H1 (cell line): ENCODE measurements at regions of chr3 and their contacts with region 1.

Region 1: GRCh38 chr3:113535898-113536297 is 3.5 kb downstream of the SIDT1 start:
- DNase-seq: no peak
- H3K4me3 ChIP-seq: no peak overlapping the region
- H3K27ac ChIP-seq: no peak overlapping the region
- H3K4me1 ChIP-seq: peaks cover 0 to 2% (median 0%) of the 10 kb centered on the region in 4 experiments; a peak in 1 of 7 replicates
- H3K27me3 ChIP-seq: peaks cover 32 to 45% (median 39%) of the 10 kb centered on the region in 4 experiments
- CTCF ChIP-seq: peak; percentile 9 to 68 (median 44); a peak in 3 of 4 replicates
- EP300 ChIP-seq: no peak
- POLR2A ChIP-seq: no peak
- RAD21 ChIP-seq: peak; percentile 48 to 52

Region 2: GRCh38 chr3:113450911-113451310 is 85.0 kb before region 1 on chr3:
- CTCF ChIA-PET with region 1: no interaction called
- POLR2A ChIA-PET with region 1: no interaction called
- DNase-seq: no peak
- H3K4me3 ChIP-seq: no peak overlapping the region
- H3K27ac ChIP-seq: no peak overlapping the region
- H3K4me1 ChIP-seq: no peaks in the 10 kb centered on the region
- H3K27me3 ChIP-seq: no peaks in the 10 kb centered on the region
- CTCF ChIP-seq: no peak
- EP300 ChIP-seq: no peak
- POLR2A ChIP-seq: no peak
- RAD21 ChIP-seq: no peak

Region 3: DNA sequence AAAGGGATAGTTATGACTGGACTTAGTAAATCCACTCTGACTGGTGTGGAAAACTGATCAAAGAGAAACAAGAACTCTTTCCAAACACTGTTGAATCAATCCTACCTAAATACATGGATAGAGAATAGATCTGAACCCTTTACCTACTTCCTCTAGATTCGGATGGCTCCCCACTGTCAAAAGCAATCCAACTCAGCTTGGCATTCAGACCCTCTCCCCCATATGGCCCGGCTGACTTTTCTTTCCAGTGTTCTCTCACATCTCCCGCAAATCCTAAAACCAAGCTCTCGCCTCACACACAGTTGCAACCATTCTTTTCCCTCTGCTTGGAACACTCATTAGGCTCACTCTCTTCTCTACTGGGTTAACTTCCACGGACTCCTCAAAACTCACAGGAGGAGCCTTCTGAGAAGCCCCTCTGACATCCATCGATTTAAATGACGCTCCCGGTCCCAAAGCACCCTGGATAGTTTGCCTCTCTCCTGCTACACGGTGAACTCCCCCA is 21.6 kb before region 1 on chr3:
- CTCF ChIA-PET with region 1: interaction called, 14 read pairs
- POLR2A ChIA-PET with region 1: interaction called, 3 read pairs
- DNase-seq: no peak
- H3K4me3 ChIP-seq: peak overlapping the region; percentile 86 to 95 (median 93)
- H3K27ac ChIP-seq: no peak overlapping the region; the same call in 1 of the 2 replicates
- H3K4me1 ChIP-seq: no peaks in the 10 kb centered on the region; a peak in 2 of 7 replicates
- H3K27me3 ChIP-seq: peaks cover 0 to 4% (median under 1%) of the 10 kb centered on the region in 4 experiments; a peak in 2 of 7 replicates
- CTCF ChIP-seq: no peak
- EP300 ChIP-seq: no peak
- POLR2A ChIP-seq: no peak
- RAD21 ChIP-seq: no peak

Region 4: DNA sequence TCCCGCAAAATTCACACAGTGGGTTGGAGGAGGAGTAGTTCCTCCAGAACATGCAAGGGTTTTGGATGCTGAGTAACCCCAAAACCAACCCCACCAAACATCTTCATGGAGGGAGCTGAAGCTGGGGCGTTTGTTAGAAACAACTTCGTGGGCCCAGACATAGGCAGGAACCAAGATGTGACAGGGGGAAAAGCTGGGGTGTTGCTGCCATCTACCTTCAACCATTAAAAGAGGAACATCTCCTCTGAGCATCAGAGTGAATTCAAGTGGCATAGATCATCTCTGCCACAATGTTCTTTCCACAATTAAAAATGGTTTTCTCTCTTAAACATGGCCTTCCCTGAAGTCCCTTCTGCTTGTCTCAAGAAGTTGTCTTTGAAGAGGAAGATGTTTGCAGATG is 17.0 kb after region 1 on chr3:
- CTCF ChIA-PET with region 1: interaction called, 19 read pairs
- POLR2A ChIA-PET with region 1: no interaction called
- DNase-seq: no peak
- H3K4me3 ChIP-seq: no peak overlapping the region
- H3K27ac ChIP-seq: no peak overlapping the region
- H3K4me1 ChIP-seq: no peaks in the 10 kb centered on the region
- H3K27me3 ChIP-seq: no peaks in the 10 kb centered on the region
- CTCF ChIP-seq: peak in 2 of 3 experiments; percentile 36 to 40; a peak in 2 of 4 replicates
- EP300 ChIP-seq: no peak
- POLR2A ChIP-seq: no peak
- RAD21 ChIP-seq: peak; percentile 56 to 70

Region 5: DNA sequence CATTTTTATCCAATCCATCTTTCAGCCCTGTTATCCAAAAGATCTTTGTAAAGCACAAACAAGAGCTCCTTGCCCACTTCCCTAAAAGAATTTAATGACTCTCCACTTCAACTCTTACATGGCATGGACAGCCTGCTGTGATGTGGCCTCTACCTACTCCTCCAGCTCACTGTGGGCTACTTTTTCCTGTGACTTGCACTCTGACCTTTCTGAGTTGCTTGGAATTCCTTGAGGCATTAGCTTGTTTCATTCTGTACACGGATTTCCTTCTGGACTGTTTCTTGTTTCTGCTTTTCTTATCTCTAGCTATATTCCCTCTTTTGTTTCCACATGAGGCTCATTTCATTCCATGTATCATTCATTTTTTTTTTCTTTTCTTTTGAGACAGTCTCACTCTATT is 535.9 kb after region 1 on chr3:
- CTCF ChIA-PET with region 1: no interaction called
- POLR2A ChIA-PET with region 1: no interaction called
- DNase-seq: no peak
- H3K4me3 ChIP-seq: no peak overlapping the region
- H3K27ac ChIP-seq: no peak overlapping the region
- H3K4me1 ChIP-seq: no peaks in the 10 kb centered on the region
- H3K27me3 ChIP-seq: no peaks in the 10 kb centered on the region
- CTCF ChIP-seq: no peak
- EP300 ChIP-seq: no peak
- POLR2A ChIP-seq: no peak
- RAD21 ChIP-seq: no peak